Activated B cell treated with CpG ODN at 0.5 μM for 24 hours (primary cell): ENCODE measurements at regions of chr18 and their contacts with region 1.

Region 1: GRCh38 chr18:12049978-12050811 is 43.4 kb upstream of the ANKRD62 start:
- DNase-seq: peak; percentile 34
- ATAC-seq: peak; percentile 88
- H3K4me3 Mint-ChIP-seq: peak overlapping the region; percentile 70
- H3K27ac Mint-ChIP-seq: peak overlapping the region; percentile 79
- H3K4me1 Mint-ChIP-seq: peaks cover 55% of the 10 kb centered on the region
- H3K27me3 Mint-ChIP-seq: no peaks in the 10 kb centered on the region
- CTCF ChIP-seq: no peak

Region 2: GRCh38 chr18:11937874-11938478 is 112.2 kb before region 1 on chr18:
- CTCF ChIA-PET with region 1: interaction called, 7 read pairs
- POLR2A ChIA-PET with region 1: no interaction called
- intact Hi-C with region 1: loop called (anchors 5 kb)
- DNase-seq: peak; percentile 47
- ATAC-seq: peak; percentile 62
- H3K4me3 Mint-ChIP-seq: no peak overlapping the region
- H3K27ac Mint-ChIP-seq: no peak overlapping the region
- H3K4me1 Mint-ChIP-seq: no peaks in the 10 kb centered on the region
- H3K27me3 Mint-ChIP-seq: no peaks in the 10 kb centered on the region
- CTCF ChIP-seq: peak; percentile 34

Region 3: DNA sequence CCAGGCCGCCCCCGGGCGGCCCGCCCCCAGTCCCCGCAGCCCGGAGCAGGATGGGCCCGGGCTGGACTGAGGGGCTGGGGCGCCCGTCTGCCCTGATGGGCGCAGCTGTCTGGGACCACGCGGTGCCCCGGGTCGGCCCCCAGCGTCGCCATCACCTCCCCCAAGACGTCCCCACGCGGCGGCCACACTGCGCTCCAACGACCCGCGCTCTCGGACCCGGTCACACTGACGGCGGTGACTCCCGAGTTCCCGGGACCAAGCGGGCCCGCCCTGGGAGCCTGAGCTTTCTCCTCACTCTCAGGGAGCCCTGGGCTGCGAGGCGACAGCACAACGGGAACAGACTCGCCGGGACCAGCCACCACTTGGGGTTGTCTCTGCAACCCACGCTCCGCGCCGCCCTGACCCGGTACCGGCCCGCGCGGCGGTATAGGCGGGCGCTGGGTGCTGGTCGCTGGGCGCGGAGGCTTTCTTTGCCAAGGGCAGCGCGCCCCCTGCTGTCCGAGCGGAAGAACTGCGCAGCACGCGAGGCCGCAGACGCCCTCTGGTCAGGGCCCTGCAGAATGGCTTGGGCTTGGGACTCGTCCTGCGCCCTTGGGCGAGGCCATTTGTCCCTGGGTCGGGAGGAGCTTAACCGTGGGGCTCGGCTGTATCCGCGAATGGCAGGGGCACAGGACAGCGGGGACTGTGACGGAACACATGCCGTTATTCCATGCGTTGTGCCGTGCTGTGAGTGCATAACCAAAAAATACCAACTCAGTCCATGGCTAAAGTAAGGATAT is 11.4 kb before region 1 on chr18:
- CTCF ChIA-PET with region 1: interaction called, 31 read pairs
- POLR2A ChIA-PET with region 1: interaction called, 5 read pairs
- intact Hi-C with region 1: loop called (anchors 1 kb)
- DNase-seq: peak; percentile 76
- ATAC-seq: peak; percentile 98
- H3K4me3 Mint-ChIP-seq: peak overlapping the region; percentile 76
- H3K27ac Mint-ChIP-seq: no peak overlapping the region
- H3K4me1 Mint-ChIP-seq: peaks cover 12% of the 10 kb centered on the region
- H3K27me3 Mint-ChIP-seq: peaks cover 7% of the 10 kb centered on the region
- CTCF ChIP-seq: peak; percentile 83

Region 4: GRCh38 chr18:12236934-12237832 is 187.0 kb after region 1 on chr18:
- CTCF ChIA-PET with region 1: interaction called, 5 read pairs
- POLR2A ChIA-PET with region 1: no interaction called
- intact Hi-C with region 1: loop called (anchors 1 kb)
- DNase-seq: peak; percentile 68
- ATAC-seq: peak; percentile 93
- H3K4me3 Mint-ChIP-seq: peak overlapping the region; percentile 25
- H3K27ac Mint-ChIP-seq: no peak overlapping the region
- H3K4me1 Mint-ChIP-seq: peaks cover 7% of the 10 kb centered on the region
- H3K27me3 Mint-ChIP-seq: peaks cover 20% of the 10 kb centered on the region
- CTCF ChIP-seq: no peak

Region 5: DNA sequence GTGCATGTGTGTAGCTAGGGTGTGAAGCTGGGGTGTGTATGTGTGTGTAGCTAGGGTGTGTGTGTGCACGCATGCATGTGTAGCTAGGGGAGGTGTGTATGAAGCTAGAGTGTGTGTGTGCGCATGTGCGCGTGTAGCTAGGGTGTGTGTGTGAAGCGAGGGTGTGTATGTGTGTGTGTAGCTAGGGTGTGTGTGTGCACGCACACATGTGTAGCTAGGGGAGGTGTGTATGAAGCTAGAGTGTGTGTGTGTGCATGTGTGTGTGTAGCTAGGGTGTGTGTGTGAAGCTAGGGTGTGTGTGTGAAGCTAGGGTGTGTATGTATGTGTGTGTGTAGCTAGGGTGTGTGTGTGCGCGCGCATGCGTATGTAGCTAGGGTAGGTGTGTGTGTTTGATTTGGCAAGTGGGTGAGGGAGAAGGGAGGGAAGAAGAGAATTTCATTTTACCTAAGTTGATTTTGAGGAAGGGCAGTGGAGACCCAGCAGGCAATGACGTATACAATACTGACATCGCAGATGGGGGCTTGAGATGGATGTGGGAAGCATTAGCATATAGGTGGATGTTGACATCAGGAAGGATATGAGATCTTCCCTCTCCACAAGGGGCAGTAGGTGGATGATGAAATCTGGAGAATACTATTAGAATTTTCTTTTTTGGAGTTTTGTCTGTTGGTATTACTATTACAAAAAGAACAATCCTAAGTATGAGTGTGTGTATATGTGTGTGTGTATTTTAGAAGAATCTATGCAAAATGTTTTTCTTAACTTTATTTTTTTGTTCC is 428.3 kb after region 1 on chr18:
- CTCF ChIA-PET with region 1: no interaction called
- POLR2A ChIA-PET with region 1: no interaction called
- intact Hi-C with region 1: no loop called
- DNase-seq: no peak
- ATAC-seq: no peak
- H3K4me3 Mint-ChIP-seq: no peak overlapping the region
- H3K27ac Mint-ChIP-seq: no peak overlapping the region
- H3K4me1 Mint-ChIP-seq: no peaks in the 10 kb centered on the region
- H3K27me3 Mint-ChIP-seq: no peaks in the 10 kb centered on the region
- CTCF ChIP-seq: no peak

Region 6: GRCh38 chr18:13137670-13138419 is 1087.7 kb after region 1 on chr18:
- CTCF ChIA-PET with region 1: no interaction called
- POLR2A ChIA-PET with region 1: no interaction called
- intact Hi-C with region 1: loop called (anchors 10 kb)
- DNase-seq: peak; percentile 43
- ATAC-seq: peak; percentile 87
- H3K4me3 Mint-ChIP-seq: peak overlapping the region; percentile 98
- H3K27ac Mint-ChIP-seq: peak overlapping the region; percentile 97
- H3K4me1 Mint-ChIP-seq: peaks cover 23% of the 10 kb centered on the region
- H3K27me3 Mint-ChIP-seq: no peaks in the 10 kb centered on the region
- CTCF ChIP-seq: no peak